Activated naive CD4-positive, alpha-beta T cell treated with anti-CD3 and anti-CD28 coated beads for 36 hours (primary cell): ENCODE measurements at regions of chr1 and their contacts with region 1.

Region 1: DNA sequence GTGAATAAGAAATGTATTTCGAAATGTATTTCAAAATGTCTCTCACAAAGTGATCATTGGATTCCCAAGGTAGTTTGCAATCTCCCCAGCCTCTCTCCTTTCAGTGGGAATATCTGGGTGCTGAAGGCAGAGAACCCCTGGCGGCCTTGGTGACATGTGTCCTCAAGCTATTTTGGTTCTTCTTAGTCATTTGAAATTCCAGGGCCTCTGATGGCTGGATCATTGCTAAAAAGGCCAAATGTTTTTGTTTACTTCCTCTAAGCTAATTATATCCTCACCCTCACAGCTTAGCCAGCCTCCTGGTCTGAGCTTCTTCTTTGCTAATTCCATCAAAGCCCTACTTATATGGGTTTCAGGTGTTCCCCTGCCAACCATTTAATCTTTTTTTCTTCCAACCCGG is 71.2 kb downstream of the LRRC40 start:
- DNase-seq: no peak
- H3K4me3 Mint-ChIP-seq: no peak overlapping the region
- H3K27ac Mint-ChIP-seq: no peak overlapping the region
- H3K4me1 Mint-ChIP-seq: no peaks in the 10 kb centered on the region
- H3K27me3 Mint-ChIP-seq: peaks cover 4% of the 10 kb centered on the region

Region 2: GRCh38 chr1:70487910-70488665 is 353.9 kb after region 1 on chr1:
- CTCF ChIA-PET with region 1: no interaction called
- intact Hi-C with region 1: loop called (anchors 1 kb)
- DNase-seq: peak; percentile 21
- H3K4me3 Mint-ChIP-seq: no peak overlapping the region
- H3K27ac Mint-ChIP-seq: no peak overlapping the region
- H3K4me1 Mint-ChIP-seq: no peaks in the 10 kb centered on the region
- H3K27me3 Mint-ChIP-seq: peaks cover 3% of the 10 kb centered on the region

Region 3: GRCh38 chr1:70509996-70510876 is 376.1 kb after region 1 on chr1:
- CTCF ChIA-PET with region 1: interaction called, 6 read pairs
- intact Hi-C with region 1: loop called (anchors 1 kb)
- DNase-seq: no peak
- H3K4me3 Mint-ChIP-seq: no peak overlapping the region
- H3K27ac Mint-ChIP-seq: no peak overlapping the region
- H3K4me1 Mint-ChIP-seq: no peaks in the 10 kb centered on the region
- H3K27me3 Mint-ChIP-seq: peaks cover 3% of the 10 kb centered on the region